ENCODE measurements at regions of chr15 and their contacts with region 1.

Region 1: DNA sequence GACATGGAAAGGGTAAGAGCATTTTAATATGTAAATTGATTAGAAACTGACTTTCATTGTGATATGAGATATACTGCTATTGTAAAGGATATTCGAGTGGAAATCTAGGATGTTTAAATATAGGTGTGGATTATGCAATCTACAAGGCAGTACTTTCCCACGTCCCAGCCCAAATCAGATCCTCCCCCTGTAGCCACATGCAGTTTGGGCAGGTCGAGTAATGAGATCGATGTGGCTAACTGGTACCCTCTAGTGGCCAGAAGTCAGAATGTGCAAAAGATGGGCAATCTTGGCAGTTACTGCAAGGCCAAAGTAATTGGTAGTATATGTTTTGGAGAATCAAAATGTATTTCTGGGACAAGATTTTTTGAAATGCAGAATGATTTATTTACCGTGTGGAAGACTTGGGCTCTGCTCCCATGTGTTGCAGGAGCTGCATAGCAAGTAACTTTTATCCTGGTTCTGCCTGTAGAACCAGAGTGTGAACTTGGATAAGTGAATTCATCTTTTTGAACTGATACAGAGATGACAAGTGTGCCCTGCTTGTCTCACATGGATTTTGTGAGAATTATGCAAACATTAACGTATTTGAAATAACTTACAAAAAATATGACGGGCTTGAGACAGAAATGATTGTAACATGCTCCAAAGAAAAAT is 94.5 kb upstream of the ADAMTSL3 start:
- DNase-seq: peak; percentile 72
- H3K4me3 Mint-ChIP-seq: no peak overlapping the region
- H3K27ac Mint-ChIP-seq: no peak overlapping the region
- H3K4me1 Mint-ChIP-seq: no peaks in the 10 kb centered on the region
- H3K27me3 Mint-ChIP-seq: peaks cover 14% of the 10 kb centered on the region
- CTCF ChIP-seq: peak; percentile 85

Region 2: DNA sequence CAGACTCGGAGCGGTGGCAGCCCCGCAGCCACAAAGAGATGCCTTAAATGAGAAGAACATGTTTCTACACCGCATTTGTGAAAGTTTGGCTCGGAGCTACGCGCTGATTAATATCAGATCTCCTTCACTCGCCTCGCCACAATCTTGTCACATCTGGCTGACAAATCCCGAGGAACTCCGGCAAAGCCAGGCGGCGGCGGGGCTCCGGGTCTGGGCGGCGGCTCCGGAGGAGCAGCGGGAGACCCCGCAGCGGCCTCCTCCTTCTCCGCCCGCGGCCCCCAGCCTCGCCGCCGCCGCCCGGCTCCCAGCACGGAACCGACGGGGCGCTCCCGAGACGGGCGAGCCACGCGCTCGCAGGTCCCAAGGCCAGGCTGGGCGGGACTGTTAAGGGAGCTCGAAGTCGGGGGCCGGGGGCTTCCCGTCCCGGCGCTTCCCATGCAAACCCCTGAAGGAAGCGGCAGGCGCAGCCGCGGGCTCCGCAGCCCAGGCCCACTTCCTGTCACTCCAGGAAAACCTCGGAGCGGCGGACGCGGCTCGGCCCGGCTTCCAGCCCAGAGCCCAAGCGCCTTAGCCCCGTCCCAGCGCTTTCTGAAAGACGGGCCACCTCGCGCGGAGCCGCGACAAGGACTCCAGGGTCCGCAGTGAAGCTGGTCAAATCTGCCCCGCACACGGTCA is 276.2 kb before region 1 on chr15:
- CTCF ChIA-PET with region 1: no interaction called
- intact Hi-C with region 1: no loop called
- DNase-seq: no peak
- H3K4me3 Mint-ChIP-seq: no peak overlapping the region
- H3K27ac Mint-ChIP-seq: no peak overlapping the region
- H3K4me1 Mint-ChIP-seq: no peaks in the 10 kb centered on the region
- H3K27me3 Mint-ChIP-seq: peaks cover 31% of the 10 kb centered on the region
- CTCF ChIP-seq: no peak

Region 3: DNA sequence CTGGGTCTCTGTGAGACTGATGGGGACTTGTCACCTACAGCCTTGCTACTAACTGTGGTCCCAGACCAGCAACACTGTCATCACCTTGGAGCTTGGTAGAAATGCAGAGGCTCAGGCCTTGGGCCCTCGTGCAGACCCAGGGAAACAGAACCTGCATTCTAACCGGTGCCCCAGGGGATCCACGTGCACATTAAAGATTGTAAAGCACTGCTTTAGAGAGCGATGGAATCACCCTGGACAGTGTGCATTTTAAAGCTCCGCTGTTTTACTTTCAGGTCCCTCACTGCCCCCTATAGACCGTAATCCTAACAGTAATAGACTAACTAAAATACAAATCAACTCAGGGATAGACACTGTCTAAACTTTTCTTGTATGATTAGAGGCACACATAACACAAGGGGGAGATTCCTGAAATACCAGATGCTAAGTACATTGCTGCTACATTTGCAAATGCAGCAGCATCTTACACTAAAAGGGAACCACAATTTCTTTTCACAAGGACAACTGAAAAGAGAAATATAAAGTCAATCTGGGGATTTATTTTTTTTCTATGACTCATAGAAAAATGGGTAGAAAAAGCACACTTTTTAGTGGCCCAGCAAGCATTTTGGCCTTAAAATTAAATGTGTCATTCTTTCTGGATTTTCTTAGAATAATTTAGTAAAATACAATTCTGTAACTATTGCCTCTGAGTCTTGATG is 122.8 kb before region 1 on chr15:
- CTCF ChIA-PET with region 1: interaction called, 6 read pairs
- intact Hi-C with region 1: loop called (anchors 1 kb)
- DNase-seq: peak; percentile 25
- H3K4me3 Mint-ChIP-seq: no peak overlapping the region
- H3K27ac Mint-ChIP-seq: no peak overlapping the region
- H3K4me1 Mint-ChIP-seq: no peaks in the 10 kb centered on the region
- H3K27me3 Mint-ChIP-seq: peaks cover 51% of the 10 kb centered on the region
- CTCF ChIP-seq: peak; percentile 52

Measured in Calu3 (cell line).